Activated B cell treated with CpG ODN at 0.5 μM for 24 hours (primary cell): ENCODE measurements at regions of chr9 and their contacts with region 1.

Region 1: DNA sequence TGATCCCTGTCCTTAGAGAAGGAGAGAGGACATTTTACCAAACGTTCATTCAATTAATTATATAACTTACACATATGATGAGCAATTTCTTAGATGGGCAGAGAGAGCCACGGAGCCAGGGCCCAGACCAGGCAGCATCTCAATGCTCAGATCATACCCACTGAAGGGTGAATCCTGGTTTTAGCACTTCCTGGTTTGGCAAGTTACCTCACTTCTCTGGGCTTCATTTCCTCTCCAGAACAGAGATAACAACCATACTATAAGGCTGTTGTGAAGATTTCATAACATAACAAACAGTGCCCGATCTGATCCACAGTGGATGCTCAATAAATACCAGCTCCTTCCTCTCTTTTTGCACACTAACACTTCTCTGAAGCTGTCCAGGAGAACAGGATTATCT is 271.1 kb downstream of the DENND1A start:
- DNase-seq: no peak
- ATAC-seq: peak; percentile 87
- H3K4me3 Mint-ChIP-seq: peak overlapping the region; percentile 68
- H3K27ac Mint-ChIP-seq: peak overlapping the region; percentile 86
- H3K4me1 Mint-ChIP-seq: peaks cover 48% of the 10 kb centered on the region
- H3K27me3 Mint-ChIP-seq: no peaks in the 10 kb centered on the region
- CTCF ChIP-seq: no peak

Region 2: GRCh38 chr9:123608104-123608503 is 50.7 kb before region 1 on chr9:
- CTCF ChIA-PET with region 1: no interaction called
- POLR2A ChIA-PET with region 1: interaction called, 3 read pairs
- intact Hi-C with region 1: loop called (anchors 2 kb)
- DNase-seq: no peak
- ATAC-seq: peak; percentile 94
- H3K4me3 Mint-ChIP-seq: peak overlapping the region; percentile 59
- H3K27ac Mint-ChIP-seq: peak overlapping the region; percentile 64
- H3K4me1 Mint-ChIP-seq: peaks cover 40% of the 10 kb centered on the region
- H3K27me3 Mint-ChIP-seq: no peaks in the 10 kb centered on the region
- CTCF ChIP-seq: no peak

Region 3: GRCh38 chr9:123679322-123679987 is 20.7 kb after region 1 on chr9:
- CTCF ChIA-PET with region 1: no interaction called
- POLR2A ChIA-PET with region 1: no interaction called
- intact Hi-C with region 1: loop called (anchors 2 kb)
- DNase-seq: no peak
- ATAC-seq: peak; percentile 93
- H3K4me3 Mint-ChIP-seq: peak overlapping the region; percentile 58
- H3K27ac Mint-ChIP-seq: peak overlapping the region; percentile 83
- H3K4me1 Mint-ChIP-seq: peaks cover 44% of the 10 kb centered on the region
- H3K27me3 Mint-ChIP-seq: no peaks in the 10 kb centered on the region
- CTCF ChIP-seq: no peak

Region 4: DNA sequence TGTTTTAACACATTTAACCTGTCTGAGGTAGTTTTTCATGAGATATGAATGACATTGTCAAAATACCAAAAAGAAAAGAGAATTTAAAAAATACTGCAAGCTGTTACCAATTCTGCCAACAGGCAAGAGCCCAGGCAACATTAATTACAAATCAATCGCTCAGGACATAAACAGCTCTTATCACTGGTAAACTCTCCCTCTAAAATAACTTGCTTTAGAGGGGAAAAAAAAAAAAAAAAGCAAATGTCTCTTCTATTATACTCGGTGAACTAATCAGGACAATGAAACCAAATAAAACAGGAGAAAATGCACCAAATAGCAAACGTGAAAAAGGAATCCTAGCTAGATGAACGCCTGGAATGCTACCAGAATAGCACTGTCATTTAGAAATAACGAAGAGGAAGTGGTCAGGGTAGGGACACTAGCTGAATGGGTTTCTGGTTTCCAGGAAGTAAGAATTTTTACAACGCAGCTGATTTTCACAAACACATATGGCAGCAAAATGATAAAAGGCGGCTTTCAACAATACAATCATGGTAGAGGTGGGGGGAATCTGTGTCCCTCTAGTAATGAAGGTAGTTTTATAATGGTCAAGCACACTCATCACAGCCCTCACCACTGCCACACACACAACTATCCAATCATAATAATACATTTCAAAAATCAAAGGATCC is 176.2 kb after region 1 on chr9:
- CTCF ChIA-PET with region 1: no interaction called
- POLR2A ChIA-PET with region 1: no interaction called
- intact Hi-C with region 1: loop called (anchors 2 kb)
- DNase-seq: no peak
- ATAC-seq: peak; percentile 73
- H3K4me3 Mint-ChIP-seq: peak overlapping the region; percentile 76
- H3K27ac Mint-ChIP-seq: peak overlapping the region; percentile 61
- H3K4me1 Mint-ChIP-seq: peaks cover 26% of the 10 kb centered on the region
- H3K27me3 Mint-ChIP-seq: no peaks in the 10 kb centered on the region
- CTCF ChIP-seq: no peak